GM12878 (cell line): ENCODE measurements at regions of chr12 and their contacts with region 1.

Region 1: GRCh38 chr12:1517007-1517406 is 77.4 kb downstream of the FBXL14 start:
- DNase-seq: no peak
- ATAC-seq: peak; percentile 83
- H3K4me3 ChIP-seq: no peak overlapping the region
- H3K27ac ChIP-seq: no peak overlapping the region
- H3K4me1 ChIP-seq: no peaks in the 10 kb centered on the region
- H3K27me3 ChIP-seq: no peaks in the 10 kb centered on the region
- CTCF ChIP-seq: peak; percentile 50 to 78 (median 71)
- EP300 ChIP-seq: no peak
- POLR2A ChIP-seq: no peak
- RAD21 ChIP-seq: peak; percentile 69

Region 2: DNA sequence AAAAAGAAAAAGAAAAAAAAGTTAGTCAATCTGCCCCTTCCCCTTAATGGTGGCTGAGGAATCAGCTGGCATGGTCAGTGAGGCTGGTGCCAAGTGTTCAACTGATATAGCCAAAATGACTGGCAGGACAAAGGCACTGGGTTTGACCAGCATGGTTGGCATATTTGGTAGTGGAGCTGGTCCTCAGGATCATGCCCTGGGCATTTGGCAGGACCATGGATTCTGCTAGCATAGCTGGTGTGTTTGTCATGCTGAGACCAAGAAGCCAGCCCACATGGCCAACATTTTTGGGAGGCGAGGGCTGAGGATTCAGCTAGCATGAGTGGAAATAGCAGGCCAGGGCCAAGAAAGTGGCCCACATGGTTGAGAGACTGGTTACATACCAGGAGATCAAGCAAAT is 59.1 kb before region 1 on chr12:
- CTCF ChIA-PET with region 1: no interaction called
- POLR2A ChIA-PET with region 1: no interaction called
- RAD21 ChIA-PET with region 1: no interaction called
- SMC1A ChIA-PET with region 1: no interaction called
- in situ Hi-C with region 1: no loop called
- intact Hi-C with region 1: no loop called
- DNase-seq: no peak
- ATAC-seq: no peak
- H3K4me3 ChIP-seq: no peak overlapping the region
- H3K27ac ChIP-seq: no peak overlapping the region
- H3K4me1 ChIP-seq: no peaks in the 10 kb centered on the region
- H3K27me3 ChIP-seq: no peaks in the 10 kb centered on the region
- CTCF ChIP-seq: no peak
- EP300 ChIP-seq: no peak
- POLR2A ChIP-seq: no peak
- RAD21 ChIP-seq: no peak

Region 3: GRCh38 chr12:1527789-1528188 is 10.8 kb after region 1 on chr12:
- CTCF ChIA-PET with region 1: interaction called, 20 read pairs
- POLR2A ChIA-PET with region 1: no interaction called
- RAD21 ChIA-PET with region 1: interaction called, 10 read pairs
- SMC1A ChIA-PET with region 1: interaction called, 5 read pairs
- in situ Hi-C with region 1: no loop called
- intact Hi-C with region 1: no loop called
- DNase-seq: no peak
- ATAC-seq: no peak
- H3K4me3 ChIP-seq: no peak overlapping the region
- H3K27ac ChIP-seq: no peak overlapping the region
- H3K4me1 ChIP-seq: peaks cover 14% of the 10 kb centered on the region
- H3K27me3 ChIP-seq: peaks cover 0 to 5% of the 10 kb centered on the region in 2 experiments; a peak in 1 of 4 replicates
- CTCF ChIP-seq: no peak
- EP300 ChIP-seq: no peak
- POLR2A ChIP-seq: no peak
- RAD21 ChIP-seq: no peak

Region 4: DNA sequence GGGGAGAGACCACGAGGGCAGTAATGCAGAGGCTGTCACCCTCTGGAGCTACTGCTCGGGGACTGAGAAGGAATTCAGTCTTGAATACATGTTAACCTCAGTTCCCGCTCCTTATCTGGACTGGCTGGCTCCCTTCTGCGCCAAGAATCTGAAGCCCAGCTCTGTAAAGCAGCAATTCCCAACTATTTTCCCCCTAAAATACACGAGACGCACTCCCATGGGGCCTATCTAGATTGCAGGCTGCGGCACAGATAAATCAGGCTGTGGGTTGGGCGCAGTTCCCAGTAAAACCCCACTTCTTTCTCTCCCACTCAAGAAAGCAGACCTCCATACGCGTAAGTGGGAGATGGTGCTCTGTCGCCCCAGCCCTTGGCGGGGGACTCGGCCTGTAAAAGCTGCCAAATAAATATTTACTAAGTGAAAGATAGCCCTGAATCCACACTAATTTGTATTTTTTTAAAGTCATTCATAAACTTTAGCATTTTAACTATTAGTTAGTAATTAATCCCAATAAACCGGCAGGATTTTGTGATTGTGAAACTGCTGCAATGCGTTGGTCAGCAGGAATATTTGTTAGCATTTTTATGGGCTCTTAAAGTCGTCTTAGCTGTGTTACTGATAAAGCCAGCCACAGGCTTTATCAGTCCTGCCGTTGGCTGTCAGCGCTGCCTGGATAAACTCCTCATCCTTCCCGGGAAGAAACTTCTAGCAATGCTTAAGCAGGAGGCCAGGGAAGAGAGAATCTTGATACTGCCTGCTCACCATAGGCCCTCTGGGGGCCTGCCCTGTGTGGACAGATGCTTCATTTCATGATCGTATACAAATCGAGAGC is 59.6 kb after region 1 on chr12:
- CTCF ChIA-PET with region 1: interaction called, 193 read pairs
- POLR2A ChIA-PET with region 1: interaction called, 3 read pairs
- RAD21 ChIA-PET with region 1: interaction called, 9 read pairs
- SMC1A ChIA-PET with region 1: interaction called, 23 read pairs
- in situ Hi-C with region 1: no loop called
- intact Hi-C with region 1: no loop called
- DNase-seq: no peak
- ATAC-seq: no peak
- H3K4me3 ChIP-seq: no peak overlapping the region
- H3K27ac ChIP-seq: no peak overlapping the region
- H3K4me1 ChIP-seq: no peaks in the 10 kb centered on the region
- H3K27me3 ChIP-seq: no peaks in the 10 kb centered on the region
- CTCF ChIP-seq: no peak
- EP300 ChIP-seq: no peak
- POLR2A ChIP-seq: no peak
- RAD21 ChIP-seq: no peak